ENCODE measurements at regions of chr3 and their contacts with region 1.

Region 1: DNA sequence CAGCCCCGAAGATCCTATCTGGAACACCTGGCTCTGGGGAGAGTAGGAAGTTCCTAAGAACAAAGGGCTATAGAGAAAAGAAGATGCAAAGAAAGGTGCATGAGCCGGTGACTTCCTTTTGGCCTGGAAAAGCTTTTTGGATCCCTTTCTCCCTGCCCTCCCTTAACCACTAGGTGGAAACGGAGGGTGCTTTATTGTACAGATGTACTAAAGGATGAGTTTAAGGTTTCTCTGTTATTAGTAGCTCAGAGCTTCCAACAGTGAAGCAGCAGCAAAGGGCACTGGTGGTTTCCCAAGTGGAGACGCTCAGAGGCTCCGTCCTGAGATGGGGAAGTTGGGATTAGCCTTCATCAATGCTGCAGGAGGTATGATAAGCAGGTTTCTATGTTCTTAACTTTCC is 5.9 kb upstream of the ADGRG7 start:
- DNase-seq: peak; percentile 41 to 60
- H3K4me3 ChIP-seq: no peak overlapping the region
- H3K27ac ChIP-seq: no peak overlapping the region
- H3K4me1 ChIP-seq: peaks cover 14% of the 10 kb centered on the region
- H3K27me3 ChIP-seq: no peaks in the 10 kb centered on the region
- CTCF ChIP-seq: peak; percentile 77

Region 2: GRCh38 chr3:100697172-100697571 is 93.7 kb after region 1 on chr3:
- CTCF ChIA-PET with region 1: no interaction called
- POLR2A ChIA-PET with region 1: no interaction called
- intact Hi-C with region 1: no loop called
- DNase-seq: no peak
- H3K4me3 ChIP-seq: no peak overlapping the region
- H3K27ac ChIP-seq: no peak overlapping the region
- H3K4me1 ChIP-seq: peaks cover 6% of the 10 kb centered on the region; the same call in 1 of the 2 replicates
- H3K27me3 ChIP-seq: no peaks in the 10 kb centered on the region
- CTCF ChIP-seq: no peak

Region 3: GRCh38 chr3:100796556-100796955 is 193.1 kb after region 1 on chr3:
- CTCF ChIA-PET with region 1: interaction called, 5 read pairs
- POLR2A ChIA-PET with region 1: no interaction called
- intact Hi-C with region 1: loop called (anchors 10 kb)
- DNase-seq: no peak
- H3K4me3 ChIP-seq: no peak overlapping the region
- H3K27ac ChIP-seq: no peak overlapping the region
- H3K4me1 ChIP-seq: no peaks in the 10 kb centered on the region
- H3K27me3 ChIP-seq: no peaks in the 10 kb centered on the region
- CTCF ChIP-seq: peak; percentile 46; the same call in 1 of the 2 replicates

Region 4: DNA sequence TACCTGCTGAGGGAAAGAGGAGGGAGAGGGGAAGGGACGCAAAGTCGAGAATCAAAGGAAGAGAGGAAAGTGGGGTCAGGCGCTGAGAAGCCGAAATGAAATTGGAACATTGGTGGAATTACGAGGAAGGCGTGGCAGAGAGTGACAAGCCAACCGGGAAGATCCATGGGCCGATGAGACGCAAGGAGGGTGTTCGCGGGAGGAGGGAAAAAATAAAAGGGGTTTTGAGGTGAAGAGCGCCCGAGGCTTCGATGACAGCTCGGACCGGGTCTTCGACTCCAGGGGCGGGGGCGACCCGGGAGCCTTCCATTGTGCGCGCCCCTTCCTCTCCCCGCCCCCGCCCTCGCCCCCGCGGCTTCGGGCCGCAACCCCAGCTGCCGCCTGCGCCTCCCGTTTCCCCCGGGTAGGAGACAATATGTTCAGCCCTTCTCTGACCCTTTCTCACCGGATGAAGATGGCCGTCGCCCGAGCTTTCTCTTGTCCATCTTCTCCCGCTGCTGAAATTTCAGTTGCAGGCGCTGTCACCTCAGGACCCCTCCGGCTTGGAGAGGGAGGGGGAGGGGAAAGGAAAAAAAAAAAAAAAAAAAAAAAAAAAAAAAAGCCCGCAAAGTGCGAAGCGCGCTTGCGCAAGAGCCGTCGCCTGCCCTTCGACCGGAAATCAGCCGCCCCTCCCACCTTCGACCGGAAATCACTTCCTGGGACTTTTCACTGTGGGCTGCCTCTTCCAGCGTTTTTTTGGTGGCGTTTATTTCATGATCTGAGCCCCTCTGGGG is 909.4 kb after region 1 on chr3 and contains the start of gene SENP7:
- CTCF ChIA-PET with region 1: no interaction called
- POLR2A ChIA-PET with region 1: no interaction called
- intact Hi-C with region 1: loop called (anchors 10 kb)
- DNase-seq: peak; percentile 79 to 84
- H3K4me3 ChIP-seq: peak within 1 kb of the TSS; percentile 73
- H3K27ac ChIP-seq: peak within 1 kb of the TSS; percentile 83
- H3K4me1 ChIP-seq: peaks cover 21% of the 10 kb centered on the region
- H3K27me3 ChIP-seq: no peaks in the 10 kb centered on the region
- CTCF ChIP-seq: no peak
- total RNA-seq, gene SENP7: 11.1 and 17.4 TPM in 2 replicates